Common myeloid progenitor, CD34-positive (primary cell): ENCODE measurements at regions of chr4 and their contacts with region 1.

Region 1: GRCh38 chr4:185640811-185641675 is 105.7 kb upstream of the PDLIM3 start:
- DNase-seq: peak; percentile 72 to 86 (median 83)
- H3K4me3 ChIP-seq: no peak overlapping the region
- H3K27ac ChIP-seq: no peak overlapping the region
- H3K4me1 ChIP-seq: peaks cover 0 to 12% (median 5%) of the 10 kb centered on the region in 4 experiments
- H3K27me3 ChIP-seq: peaks cover 4 to 41% (median 18%) of the 10 kb centered on the region in 5 experiments

Region 2: DNA sequence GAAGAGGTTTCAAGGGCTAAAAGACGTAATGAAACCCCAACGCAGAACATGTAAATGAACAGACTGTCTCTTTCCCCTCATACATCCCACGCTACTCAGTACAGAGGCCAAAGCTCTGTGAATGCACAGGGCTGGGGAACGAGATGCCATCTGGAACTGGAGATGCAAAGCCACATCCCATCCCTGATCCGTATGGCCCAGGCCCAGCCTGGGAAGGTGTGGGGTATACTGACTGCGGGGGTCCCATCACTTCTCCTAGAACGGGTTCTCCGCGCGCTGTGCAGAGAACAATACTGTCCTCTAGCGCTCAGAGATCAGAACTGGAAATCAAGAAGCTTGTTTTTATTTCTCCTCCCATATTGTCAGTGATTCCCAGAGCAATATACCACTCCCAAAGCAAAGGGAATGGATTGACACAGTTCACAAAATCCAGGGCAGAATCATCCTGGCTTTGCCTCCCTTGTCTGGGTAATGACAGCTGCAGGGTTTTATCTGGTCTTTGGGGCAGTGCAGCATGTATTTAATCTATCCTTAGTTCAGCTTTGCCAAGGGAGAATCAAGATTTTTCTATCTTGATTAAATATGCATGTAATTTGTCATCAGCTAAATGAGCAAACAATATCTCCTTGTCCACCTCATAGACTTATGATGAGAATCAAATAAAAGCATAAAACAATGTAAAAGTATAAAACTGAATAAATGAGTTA is 380.6 kb after region 1 on chr4:
- CTCF ChIA-PET with region 1: interaction called, 63 read pairs
- POLR2A ChIA-PET with region 1: no interaction called
- DNase-seq: peak; percentile 23 to 34 (median 29)
- H3K4me3 ChIP-seq: no peak overlapping the region
- H3K27ac ChIP-seq: no peak overlapping the region
- H3K4me1 ChIP-seq: no peaks in the 10 kb centered on the region
- H3K27me3 ChIP-seq: peaks cover 0 to 5% (median 1%) of the 10 kb centered on the region in 5 experiments

Region 3: GRCh38 chr4:186037692-186038658 is 396.9 kb after region 1 on chr4:
- CTCF ChIA-PET with region 1: interaction called, 36 read pairs
- POLR2A ChIA-PET with region 1: no interaction called
- DNase-seq: peak; percentile 74 to 86 (median 77)
- H3K4me3 ChIP-seq: no peak overlapping the region
- H3K27ac ChIP-seq: no peak overlapping the region
- H3K4me1 ChIP-seq: no peaks in the 10 kb centered on the region
- H3K27me3 ChIP-seq: peaks cover 0 to 16% (median 12%) of the 10 kb centered on the region in 5 experiments